Heart left ventricle (tissue), 16 donors: ENCODE measurements at regions of chr5 and their contacts with region 1.

Region 1: DNA sequence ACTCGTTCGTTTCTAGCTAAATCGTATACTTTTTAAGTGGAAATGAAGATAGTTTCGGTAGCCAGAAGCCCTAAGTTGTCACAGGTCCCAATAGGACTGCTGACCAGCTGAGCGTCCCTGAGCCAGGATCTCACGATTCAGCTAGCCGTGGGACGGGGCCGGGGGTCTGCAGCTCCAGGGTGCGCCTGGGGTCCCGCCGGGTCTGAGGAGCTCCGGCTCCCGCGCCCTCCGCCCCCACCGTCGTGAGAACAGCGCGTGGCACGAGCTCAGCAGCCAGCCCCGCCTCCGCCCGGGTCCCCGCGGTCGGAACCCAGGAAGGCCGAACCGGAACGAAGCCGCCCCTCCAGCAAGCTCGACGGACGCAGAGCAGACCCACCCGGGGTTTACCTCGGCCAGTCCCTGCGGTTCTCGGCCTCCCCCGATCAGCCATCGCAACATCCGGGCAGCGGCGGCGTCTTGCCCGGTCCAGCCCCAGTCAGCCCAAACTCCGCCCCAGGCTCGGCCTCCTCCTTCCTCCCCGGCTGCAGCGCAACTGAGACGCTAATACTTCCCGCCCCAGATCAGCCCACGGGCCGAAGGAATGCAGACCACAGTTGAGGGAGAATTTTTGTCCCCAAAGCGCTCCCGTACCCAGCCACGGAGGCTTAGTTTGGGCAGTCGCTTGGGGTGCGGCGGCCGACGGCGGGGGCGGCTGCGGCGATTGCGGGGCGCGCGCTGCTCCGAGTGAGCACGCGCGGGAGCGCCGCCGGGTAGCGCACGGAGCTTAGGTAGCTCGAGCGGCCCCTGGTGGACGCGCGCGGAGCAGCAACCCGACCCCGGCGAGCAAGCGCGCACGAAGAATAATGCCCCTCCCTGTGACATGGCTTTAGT is at the start of gene WDR41:
- DNase-seq: peak; percentile 93 to 95 (median 95)
- ATAC-seq: peak; percentile 95 to 98 (median 98)
- H3K4me3 ChIP-seq: peak within 1 kb of the TSS; percentile 69 to 93 (median 79)
- H3K27ac ChIP-seq: peak within 1 kb of the TSS; percentile 81 to 97 (median 93)
- H3K4me1 ChIP-seq: peaks cover 0 to 16% (median 3%) of the 10 kb centered on the region in 12 donors
- H3K27me3 ChIP-seq: no peaks in the 10 kb centered on the region
- CTCF ChIP-seq: peak; percentile 88 to 99 (median 96)
- POLR2A ChIP-seq: peak in 1 of 2 donors; percentile 51
- total RNA-seq, gene WDR41: 22.2 to 50.9 (median 35.0) TPM

Region 2: GRCh38 chr5:76867827-76868693 is 624.0 kb before region 1 on chr5:
- intact Hi-C with region 1: loop called in 6 of 10 experiments (anchors 5 to 10 kb)
- DNase-seq: peak in 4 of 5 donors; percentile 55 to 63 (median 60)
- ATAC-seq: peak; percentile 64 to 95 (median 90)
- H3K4me3 ChIP-seq: peak overlapping the region in 1 of 12 donors; percentile 20
- H3K27ac ChIP-seq: peak overlapping the region in 3 of 12 donors; percentile 28 to 38 (median 30)
- H3K4me1 ChIP-seq: peaks cover 0 to 7% (median 0%) of the 10 kb centered on the region in 12 donors
- H3K27me3 ChIP-seq: no peaks in the 10 kb centered on the region
- CTCF ChIP-seq: peak; percentile 69 to 90 (median 82)
- POLR2A ChIP-seq: no peak

Region 3: GRCh38 chr5:77076961-77077823 is 414.8 kb before region 1 on chr5:
- intact Hi-C with region 1: loop called in 2 of 10 experiments (anchors 2 to 5 kb)
- DNase-seq: peak; percentile 71 to 88 (median 74)
- ATAC-seq: peak; percentile 52 to 91 (median 88)
- H3K4me3 ChIP-seq: peak overlapping the region; percentile 26 to 84 (median 59)
- H3K27ac ChIP-seq: peak overlapping the region; percentile 3 to 68 (median 49)
- H3K4me1 ChIP-seq: peaks cover 0 to 16% (median 2%) of the 10 kb centered on the region in 12 donors
- H3K27me3 ChIP-seq: no peaks in the 10 kb centered on the region
- CTCF ChIP-seq: peak; percentile 52 to 84 (median 75)
- POLR2A ChIP-seq: no peak

Region 4: DNA sequence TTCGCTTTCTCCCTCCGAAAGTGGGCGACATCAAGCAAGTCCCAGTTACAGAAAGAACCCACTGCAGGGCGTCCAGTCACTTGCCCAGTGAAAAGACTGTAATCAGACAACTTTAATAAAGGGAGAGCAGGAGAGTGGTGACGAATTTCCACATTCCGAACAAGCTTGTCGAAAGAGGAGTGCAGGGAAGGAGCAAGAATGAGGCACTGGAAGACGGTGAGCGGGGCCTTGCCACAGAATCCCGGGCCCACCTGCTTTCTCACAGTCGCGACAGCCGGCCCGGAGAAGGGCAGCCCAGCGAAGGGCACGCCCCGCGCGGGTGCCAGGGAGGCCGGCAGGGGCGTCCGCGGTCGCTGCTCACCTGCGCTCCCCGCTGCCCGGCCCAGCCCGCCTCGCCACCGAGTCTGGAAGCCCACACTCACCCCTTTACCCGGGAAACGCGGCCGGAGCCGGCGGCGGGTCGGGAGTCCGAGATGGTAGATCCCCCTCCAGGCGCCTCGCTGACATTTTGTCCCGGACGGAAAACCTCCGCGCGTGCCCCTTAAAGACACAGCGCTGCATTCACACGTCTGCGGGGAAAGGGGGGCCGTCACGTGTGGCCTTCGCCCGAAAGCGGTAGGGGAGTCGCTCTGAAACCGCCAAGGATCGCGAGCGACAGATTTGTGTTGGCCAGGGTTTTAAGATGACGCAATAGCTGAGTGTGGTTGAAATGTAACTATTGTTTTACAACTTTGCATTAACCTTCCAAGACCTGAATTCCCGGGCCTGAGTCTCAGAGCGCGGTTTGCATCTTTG is 405.1 kb before region 1 on chr5 and contains the start of gene ZBED3:
- intact Hi-C with region 1: loop called in 4 of 10 experiments (anchors 5 kb)
- DNase-seq: peak; percentile 62 to 78 (median 66)
- ATAC-seq: peak; percentile 64 to 86 (median 80)
- H3K4me3 ChIP-seq: peak within 1 kb of the TSS; percentile 66 to 98 (median 87)
- H3K27ac ChIP-seq: peak within 1 kb of the TSS; percentile 81 to 95 (median 88)
- H3K4me1 ChIP-seq: peaks cover 0 to 22% (median 15%) of the 10 kb centered on the region in 12 donors
- H3K27me3 ChIP-seq: no peaks in the 10 kb centered on the region
- CTCF ChIP-seq: peak in 6 of 12 donors; percentile 14 to 34 (median 21)
- POLR2A ChIP-seq: peak in 1 of 2 donors; percentile 31
- total RNA-seq, gene ZBED3: 3.7 to 8.1 (median 6.5) TPM